ENCODE measurements at regions of chr1 and their contacts with region 1.

Region 1: GRCh38 chr1:205631727-205632373 is at the start of gene ELK4:
- DNase-seq: peak; percentile 99
- H3K4me3 ChIP-seq: peak within 1 kb of the TSS; percentile 82
- H3K4me3 Mint-ChIP-seq: peak within 1 kb of the TSS; percentile 86
- H3K27ac Mint-ChIP-seq: peak within 1 kb of the TSS; percentile 87
- H3K4me1 ChIP-seq: peaks cover 8% of the 10 kb centered on the region; the same call in 1 of the 2 replicates
- H3K4me1 Mint-ChIP-seq: peaks cover 6% of the 10 kb centered on the region
- H3K27me3 ChIP-seq: no peaks in the 10 kb centered on the region
- H3K27me3 Mint-ChIP-seq: no peaks in the 10 kb centered on the region
- CTCF ChIP-seq: peak; percentile 57 to 80
- total RNA-seq, gene ELK4: 14.4 and 16.9 TPM in 2 replicates

Region 2: GRCh38 chr1:205528887-205529825 is 102.7 kb before region 1 on chr1:
- CTCF ChIA-PET with region 1: interaction called, 11 read pairs
- POLR2A ChIA-PET with region 1: interaction called, 3 read pairs
- intact Hi-C with region 1: loop called (anchors 1 kb)
- DNase-seq: peak; percentile 71 to 85
- H3K4me3 ChIP-seq: no peak overlapping the region
- H3K4me3 Mint-ChIP-seq: peak overlapping the region; percentile 49
- H3K27ac Mint-ChIP-seq: no peak overlapping the region
- H3K4me1 ChIP-seq: no peaks in the 10 kb centered on the region
- H3K4me1 Mint-ChIP-seq: no peaks in the 10 kb centered on the region
- H3K27me3 ChIP-seq: no peaks in the 10 kb centered on the region
- H3K27me3 Mint-ChIP-seq: peaks cover 4% of the 10 kb centered on the region
- CTCF ChIP-seq: peak; percentile 93 to 94

Region 3: DNA sequence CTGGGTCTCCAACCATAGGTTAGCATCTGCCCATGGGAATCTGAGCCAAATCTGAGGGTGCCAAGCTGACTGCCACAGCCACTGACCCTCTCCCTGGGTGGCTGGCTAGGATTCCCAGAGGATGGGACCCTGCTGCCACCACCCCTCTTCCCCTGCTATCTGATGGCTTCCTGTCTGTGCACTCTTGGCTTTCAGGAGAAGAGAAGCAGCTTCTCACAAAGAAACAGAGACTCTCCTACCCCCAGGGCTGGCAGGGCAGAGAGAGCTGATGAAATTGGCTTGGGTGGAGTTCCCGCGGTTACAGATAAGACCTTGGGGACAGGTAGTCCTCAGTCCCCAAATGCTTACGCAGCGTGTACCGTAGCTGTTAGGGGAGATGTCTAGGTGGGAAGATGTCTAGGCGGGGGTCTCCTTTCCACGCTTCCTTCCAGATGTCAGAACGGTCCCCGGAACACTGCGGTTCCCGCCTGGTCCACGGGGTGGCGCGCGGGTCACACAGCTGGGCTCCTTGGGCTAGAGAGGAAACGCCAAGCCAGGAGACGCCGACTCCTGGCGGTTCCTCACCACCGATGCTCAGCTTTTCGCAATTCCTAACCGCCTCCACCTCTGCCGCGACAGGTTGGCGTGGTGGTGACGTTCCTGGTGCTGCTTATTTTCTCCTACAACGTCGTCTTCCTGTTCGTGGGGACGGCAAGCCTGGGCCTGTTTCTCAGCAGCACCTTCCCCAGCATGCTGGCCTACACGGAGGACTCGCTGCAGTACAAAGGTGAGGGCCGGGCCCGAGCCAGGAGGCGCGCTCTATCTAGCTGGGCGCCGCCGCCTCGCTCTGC is 40.1 kb before region 1 on chr1:
- CTCF ChIA-PET with region 1: interaction called, 44 read pairs
- POLR2A ChIA-PET with region 1: interaction called, 11 read pairs
- intact Hi-C with region 1: loop called (anchors 1 kb)
- DNase-seq: peak; percentile 87 to 93
- H3K4me3 ChIP-seq: peak overlapping the region; percentile 38
- H3K4me3 Mint-ChIP-seq: peak overlapping the region; percentile 73
- H3K27ac Mint-ChIP-seq: no peak overlapping the region
- H3K4me1 ChIP-seq: no peaks in the 10 kb centered on the region
- H3K4me1 Mint-ChIP-seq: no peaks in the 10 kb centered on the region
- H3K27me3 ChIP-seq: no peaks in the 10 kb centered on the region
- H3K27me3 Mint-ChIP-seq: no peaks in the 10 kb centered on the region
- CTCF ChIP-seq: peak; percentile 97 to 98

Measured in Caco-2 (cell line).